ENCODE measurements at regions of chr1 and their contacts with region 1.

Region 1: GRCh38 chr1:168342572-168343280 is 62.0 kb downstream of the TBX19 start:
- DNase-seq: peak; percentile 55 to 76
- H3K4me3 ChIP-seq: no peak overlapping the region; the same call in 1 of the 2 replicates
- H3K27ac ChIP-seq: no peak overlapping the region
- H3K4me1 ChIP-seq: no peaks in the 10 kb centered on the region
- H3K27me3 ChIP-seq: no peaks in the 10 kb centered on the region
- CTCF ChIP-seq: peak; percentile 71

Region 2: GRCh38 chr1:168092566-168093355 is 250.0 kb before region 1 on chr1:
- CTCF ChIA-PET with region 1: no interaction called
- POLR2A ChIA-PET with region 1: no interaction called
- intact Hi-C with region 1: loop called (anchors 5 kb)
- DNase-seq: no peak
- H3K4me3 ChIP-seq: no peak overlapping the region
- H3K27ac ChIP-seq: no peak overlapping the region
- H3K4me1 ChIP-seq: no peaks in the 10 kb centered on the region
- H3K27me3 ChIP-seq: no peaks in the 10 kb centered on the region
- CTCF ChIP-seq: peak; percentile 27; the same call in 1 of the 2 replicates

Region 3: DNA sequence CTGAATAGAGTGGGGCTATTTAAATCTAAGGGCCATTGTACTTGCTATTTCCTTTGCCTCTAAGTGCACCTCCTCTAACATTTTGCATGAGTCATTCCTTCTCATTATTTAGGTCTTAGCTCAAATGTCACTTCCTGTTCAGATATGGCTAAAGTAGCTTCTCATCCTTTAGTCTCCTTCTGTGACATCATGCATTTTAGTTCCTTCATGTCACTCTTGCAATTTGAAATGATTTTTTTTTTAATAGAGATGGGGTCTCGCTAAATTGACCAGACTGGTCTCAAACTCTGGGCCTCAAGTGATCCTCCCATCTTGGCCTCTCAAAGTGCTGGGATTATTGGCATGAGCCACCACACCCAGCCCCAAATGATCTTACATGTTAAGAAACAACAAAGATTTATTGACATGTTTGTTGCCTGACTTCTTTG is 55.5 kb before region 1 on chr1:
- CTCF ChIA-PET with region 1: interaction called, 11 read pairs
- POLR2A ChIA-PET with region 1: interaction called, 5 read pairs
- intact Hi-C with region 1: no loop called
- DNase-seq: peak in 1 of 2 experiments; percentile 79
- H3K4me3 ChIP-seq: no peak overlapping the region
- H3K27ac ChIP-seq: peak overlapping the region; percentile 2; the same call in 1 of the 2 replicates
- H3K4me1 ChIP-seq: peaks cover 30% of the 10 kb centered on the region
- H3K27me3 ChIP-seq: no peaks in the 10 kb centered on the region
- CTCF ChIP-seq: no peak

Region 4: DNA sequence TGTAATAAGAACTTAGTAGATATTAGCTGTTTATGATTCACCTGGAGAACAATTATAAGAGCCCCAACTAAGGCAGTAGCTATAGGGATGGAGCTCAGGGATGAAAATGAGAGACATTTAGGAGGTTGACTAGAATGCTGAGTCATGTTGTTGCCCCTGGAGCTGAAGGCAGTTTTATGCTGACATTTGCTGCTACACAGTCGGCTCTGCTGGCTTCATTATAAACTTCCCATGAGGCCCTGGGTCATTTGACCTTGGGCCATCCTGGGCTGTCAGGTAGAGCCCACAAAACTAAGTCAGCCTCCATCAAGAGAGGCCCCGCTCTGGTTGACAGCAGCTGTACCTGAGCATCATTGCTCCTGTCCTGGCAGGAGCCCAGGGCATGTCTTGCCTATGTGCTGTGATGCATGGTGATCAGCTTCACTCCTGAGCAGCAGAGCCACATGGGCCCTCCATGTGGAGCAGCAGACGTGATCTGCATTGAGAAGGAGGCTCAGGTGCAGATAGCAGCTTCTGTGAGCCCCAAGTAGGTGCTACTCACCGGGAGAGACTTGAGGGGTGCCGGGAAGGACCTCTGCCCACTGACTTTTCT is 50.3 kb after region 1 on chr1:
- CTCF ChIA-PET with region 1: no interaction called
- POLR2A ChIA-PET with region 1: no interaction called
- intact Hi-C with region 1: no loop called
- DNase-seq: no peak
- H3K4me3 ChIP-seq: no peak overlapping the region
- H3K27ac ChIP-seq: no peak overlapping the region
- H3K4me1 ChIP-seq: peaks cover 20% of the 10 kb centered on the region
- H3K27me3 ChIP-seq: no peaks in the 10 kb centered on the region
- CTCF ChIP-seq: no peak

Region 5: DNA sequence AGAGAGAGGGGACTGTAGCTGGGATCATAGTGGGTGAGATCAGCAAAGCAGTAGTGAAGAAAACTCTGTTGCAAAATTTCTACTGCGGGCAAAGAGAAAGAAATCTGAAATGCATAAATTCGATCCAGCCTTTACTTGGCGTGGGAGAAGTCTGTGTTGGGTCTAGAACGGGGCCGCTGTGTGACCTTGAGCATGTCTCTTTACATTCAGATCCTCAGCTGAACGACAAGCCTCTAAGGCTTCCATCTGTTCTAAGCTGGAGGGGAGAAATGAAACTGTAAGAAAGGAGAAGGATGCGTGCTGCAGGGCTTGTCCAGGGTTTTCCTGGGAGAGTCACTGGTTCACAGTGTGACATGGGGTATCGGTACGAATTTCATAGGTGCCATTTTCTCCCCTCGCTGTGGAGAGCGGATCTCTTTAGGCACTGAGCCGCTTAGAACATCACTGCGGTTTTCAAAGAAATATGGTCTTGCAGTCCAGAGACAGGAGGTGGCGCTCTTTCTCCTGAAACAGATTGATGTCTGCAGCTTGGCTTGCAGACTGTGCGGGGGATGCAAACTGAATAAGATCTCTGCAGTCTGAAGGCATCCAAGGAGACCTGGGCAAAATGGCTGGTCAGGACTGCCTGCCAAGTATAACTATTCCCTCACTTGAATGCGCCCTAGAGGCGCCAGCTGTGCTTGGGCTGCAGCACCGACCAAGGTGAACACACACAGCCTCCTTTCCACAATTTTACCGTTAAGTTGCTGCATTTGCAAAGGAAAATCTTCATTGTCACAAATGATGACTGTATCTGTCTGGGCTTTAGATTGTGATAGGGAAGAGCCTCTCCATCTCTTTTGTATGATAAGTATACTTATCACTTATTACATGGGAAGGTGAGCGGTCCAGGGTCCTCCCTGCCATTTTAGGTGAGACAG is 97.0 kb after region 1 on chr1:
- CTCF ChIA-PET with region 1: interaction called, 8 read pairs
- POLR2A ChIA-PET with region 1: no interaction called
- intact Hi-C with region 1: loop called (anchors 2 kb)
- DNase-seq: peak; percentile 59 to 67
- H3K4me3 ChIP-seq: peak overlapping the region; percentile 35; the same call in 1 of the 2 replicates
- H3K27ac ChIP-seq: no peak overlapping the region
- H3K4me1 ChIP-seq: no peaks in the 10 kb centered on the region; the same call in 1 of the 2 replicates
- H3K27me3 ChIP-seq: no peaks in the 10 kb centered on the region
- CTCF ChIP-seq: peak; percentile 85

Region 6: DNA sequence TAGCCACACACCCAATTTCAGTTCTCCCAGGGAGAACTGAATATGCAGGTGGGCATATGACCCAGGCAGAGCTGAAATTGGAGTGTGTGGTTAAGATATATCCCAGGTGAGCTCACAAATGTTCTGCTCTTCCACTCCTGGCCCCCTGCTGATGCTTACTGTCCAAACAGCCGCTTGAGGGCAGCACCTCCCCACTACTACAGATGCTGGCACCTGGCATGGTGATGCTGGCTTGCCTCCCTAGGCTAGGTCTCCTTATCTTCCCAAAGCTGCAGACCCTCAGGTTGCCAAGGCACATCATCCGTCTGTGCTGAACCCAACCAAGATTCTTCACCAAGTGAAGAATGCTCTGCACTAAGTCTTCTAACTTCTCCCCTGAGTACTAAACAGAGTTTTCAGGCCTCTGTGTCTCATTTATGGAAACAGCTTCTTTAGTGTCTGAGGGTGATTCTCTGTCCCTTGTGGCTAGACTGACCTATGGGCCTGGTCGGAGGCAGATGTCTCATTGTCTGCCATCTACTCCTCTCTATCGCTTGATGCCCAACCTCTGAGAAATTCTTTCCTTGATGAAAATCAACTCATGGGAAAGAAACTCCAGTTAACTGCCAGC is 260.9 kb after region 1 on chr1:
- CTCF ChIA-PET with region 1: interaction called, 12 read pairs
- POLR2A ChIA-PET with region 1: no interaction called
- intact Hi-C with region 1: loop called (anchors 5 kb)
- DNase-seq: peak; percentile 47 to 71
- H3K4me3 ChIP-seq: no peak overlapping the region
- H3K27ac ChIP-seq: no peak overlapping the region
- H3K4me1 ChIP-seq: 0 out of 2 replicates have a peak, but pooled peaks cover 5% of the 10 kb centered on the region
- H3K27me3 ChIP-seq: no peaks in the 10 kb centered on the region
- CTCF ChIP-seq: peak; percentile 95

Region 7: GRCh38 chr1:169106095-169106920 is 763.6 kb after region 1 on chr1 and contains the start of gene ATP1B1:
- CTCF ChIA-PET with region 1: no interaction called
- POLR2A ChIA-PET with region 1: no interaction called
- intact Hi-C with region 1: loop called (anchors 1 kb)
- DNase-seq: peak; percentile 74 to 95
- H3K4me3 ChIP-seq: peak within 1 kb of the TSS; percentile 99
- H3K27ac ChIP-seq: peak within 1 kb of the TSS; percentile 83
- H3K4me1 ChIP-seq: peaks cover 48% of the 10 kb centered on the region
- H3K27me3 ChIP-seq: no peaks in the 10 kb centered on the region
- CTCF ChIP-seq: peak; percentile 72
- total RNA-seq, gene ATP1B1: 110 and 113 TPM in 2 replicates

Region 8: DNA sequence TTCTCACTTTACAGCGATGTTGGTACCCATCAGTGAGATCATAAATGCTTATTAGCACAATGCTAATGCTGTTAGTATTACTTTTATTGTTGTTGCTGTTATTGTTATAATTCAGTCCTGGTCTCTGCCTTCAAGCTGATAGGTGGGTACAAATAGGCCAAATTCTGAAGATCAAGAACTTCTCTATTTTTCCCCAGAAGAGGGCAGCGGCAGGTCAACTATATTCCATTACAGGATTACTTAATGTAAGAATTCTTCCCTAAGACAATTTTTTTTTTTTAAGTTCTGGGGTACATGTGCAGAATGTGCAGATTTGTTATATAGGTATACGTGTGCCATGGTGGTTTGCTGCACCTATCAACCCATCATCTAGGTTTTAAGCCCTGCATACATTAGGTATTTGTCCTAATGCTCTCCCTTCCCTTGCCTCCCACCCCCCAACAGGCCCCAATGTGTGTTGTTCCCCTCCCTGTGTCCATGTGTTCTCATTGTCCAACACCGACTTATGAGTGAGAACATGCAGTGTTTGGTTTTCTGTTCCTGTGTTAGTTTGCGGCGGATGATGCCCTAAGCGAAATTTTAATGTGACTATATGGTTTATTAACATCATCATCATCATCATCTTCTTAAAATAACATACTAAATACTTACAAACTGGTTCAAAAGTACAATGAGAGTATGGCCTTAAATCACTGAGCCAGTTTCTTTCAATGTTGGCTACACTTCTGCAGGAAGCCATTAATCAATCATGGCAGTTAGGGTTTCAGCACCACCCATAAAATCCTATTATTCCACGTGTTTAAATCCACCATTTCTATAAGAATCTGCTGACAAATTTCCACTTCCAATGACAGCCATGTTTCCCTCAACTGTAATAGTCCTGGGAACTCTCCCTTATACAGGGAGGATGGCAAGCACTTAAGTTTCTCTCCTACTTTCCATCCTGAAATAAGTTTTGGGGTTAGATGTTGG is 1123.8 kb after region 1 on chr1:
- CTCF ChIA-PET with region 1: no interaction called
- POLR2A ChIA-PET with region 1: no interaction called
- intact Hi-C with region 1: loop called (anchors 10 kb)
- DNase-seq: peak in 1 of 2 experiments; percentile 29
- H3K4me3 ChIP-seq: no peak overlapping the region
- H3K27ac ChIP-seq: no peak overlapping the region
- H3K4me1 ChIP-seq: no peaks in the 10 kb centered on the region
- H3K27me3 ChIP-seq: no peaks in the 10 kb centered on the region
- CTCF ChIP-seq: peak; percentile 67; the same call in 1 of the 2 replicates

Measured in PC-9 (cell line).